AG04450 (cell line): ENCODE measurements at regions of chr1 and their contacts with region 1.

Region 1: GRCh38 chr1:32215629-32216480 is 6.3 kb downstream of the TMEM234 start:
- DNase-seq: no peak
- H3K4me3 ChIP-seq: no peak overlapping the region
- H3K27ac ChIP-seq: no peak overlapping the region
- H3K27me3 ChIP-seq: no peaks in the 10 kb centered on the region
- CTCF ChIP-seq: peak; percentile 90

Region 2: DNA sequence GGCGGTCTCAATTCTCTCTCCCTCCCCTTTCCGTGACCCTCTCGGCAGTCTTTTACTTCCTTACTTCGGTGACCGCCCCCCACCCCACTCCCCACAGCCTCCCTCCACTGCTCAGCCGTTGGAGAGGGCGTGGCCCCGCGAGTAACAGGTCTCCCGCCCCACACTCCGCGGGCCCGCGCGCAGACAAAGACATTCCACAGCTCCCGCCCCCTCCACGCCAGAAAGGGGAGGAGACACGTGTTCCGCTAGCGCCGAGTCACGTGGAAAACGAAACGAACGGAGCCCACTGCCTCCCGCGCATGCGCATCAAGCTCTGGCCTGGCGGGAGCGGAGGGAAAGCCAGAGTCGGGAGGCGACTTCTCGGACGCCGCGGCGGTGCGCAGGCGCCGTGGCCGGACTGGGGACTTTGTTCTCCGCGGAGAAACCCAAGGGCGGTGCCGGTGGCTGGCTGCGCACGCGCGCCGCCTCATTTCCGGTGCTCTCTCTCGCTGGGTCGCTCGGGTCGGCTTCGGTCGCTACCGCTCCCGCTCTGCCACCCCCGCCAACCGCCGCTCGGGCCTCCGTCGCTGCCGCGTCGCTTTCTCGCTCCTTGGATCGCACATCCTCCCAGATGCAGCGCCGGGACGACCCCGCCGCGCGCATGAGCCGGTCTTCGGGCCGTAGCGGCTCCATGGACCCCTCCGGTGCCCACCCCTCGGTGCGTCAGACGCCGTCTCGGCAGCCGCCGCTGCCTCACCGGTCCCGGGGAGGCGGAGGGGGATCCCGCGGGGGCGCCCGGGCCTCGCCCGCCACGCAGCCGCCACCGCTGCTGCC is 202.3 kb before region 1 on chr1 and contains the start of gene KHDRBS1:
- CTCF ChIA-PET with region 1: no interaction called
- POLR2A ChIA-PET with region 1: no interaction called
- DNase-seq: peak; percentile 99
- H3K4me3 ChIP-seq: peak within 1 kb of the TSS; percentile 99
- H3K27ac ChIP-seq: peak within 1 kb of the TSS; percentile 96
- H3K27me3 ChIP-seq: no peaks in the 10 kb centered on the region
- CTCF ChIP-seq: no peak
- polyA plus RNA-seq, gene KHDRBS1: 76.2 and 76.6 TPM in 2 replicates

Region 3: DNA sequence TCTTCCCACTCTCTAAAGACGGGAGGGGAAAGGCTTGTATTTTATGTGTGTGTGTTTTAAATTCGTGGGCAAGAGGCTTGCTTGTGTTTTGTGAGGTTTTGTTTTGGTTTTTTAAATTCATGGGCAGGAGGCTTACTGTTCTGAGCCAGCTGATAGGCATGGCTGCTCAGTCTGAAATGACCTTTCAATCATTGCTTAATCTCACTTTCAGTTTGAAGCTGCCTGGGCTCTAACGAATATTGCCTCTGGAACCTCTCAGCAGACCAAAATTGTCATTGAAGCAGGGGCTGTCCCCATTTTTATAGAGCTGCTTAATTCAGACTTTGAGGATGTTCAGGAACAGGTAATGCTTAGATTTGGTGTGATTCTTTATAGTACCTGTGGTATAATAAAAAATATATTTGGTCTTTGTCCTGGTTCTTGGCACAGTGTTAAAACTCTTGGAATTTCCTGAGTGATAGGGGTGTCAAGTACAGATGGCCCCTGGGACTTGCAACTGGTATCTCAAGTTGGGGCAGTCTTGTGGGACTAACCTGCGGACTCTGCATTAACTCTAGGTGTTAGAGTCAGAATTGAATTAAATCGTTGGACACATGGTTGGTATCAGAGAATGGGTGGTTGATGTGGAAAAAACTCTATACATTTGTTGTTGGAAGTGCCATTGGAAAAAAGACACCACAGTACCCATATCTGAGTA is 56.5 kb before region 1 on chr1:
- CTCF ChIA-PET with region 1: no interaction called
- POLR2A ChIA-PET with region 1: no interaction called
- DNase-seq: no peak
- H3K4me3 ChIP-seq: no peak overlapping the region
- H3K27ac ChIP-seq: no peak overlapping the region
- H3K27me3 ChIP-seq: no peaks in the 10 kb centered on the region
- CTCF ChIP-seq: no peak

Region 4: GRCh38 chr1:32205401-32206370 is 10.2 kb before region 1 on chr1 and contains the start of gene IQCC:
- CTCF ChIA-PET with region 1: interaction called, 18 read pairs
- POLR2A ChIA-PET with region 1: interaction called, 3 read pairs
- DNase-seq: no peak
- H3K4me3 ChIP-seq: peak within 1 kb of the TSS; percentile 80
- H3K27ac ChIP-seq: peak within 1 kb of the TSS; percentile 39
- H3K27me3 ChIP-seq: no peaks in the 10 kb centered on the region
- CTCF ChIP-seq: no peak
- polyA plus RNA-seq, gene IQCC: 1.2 and 1.3 TPM in 2 replicates

Region 5: DNA sequence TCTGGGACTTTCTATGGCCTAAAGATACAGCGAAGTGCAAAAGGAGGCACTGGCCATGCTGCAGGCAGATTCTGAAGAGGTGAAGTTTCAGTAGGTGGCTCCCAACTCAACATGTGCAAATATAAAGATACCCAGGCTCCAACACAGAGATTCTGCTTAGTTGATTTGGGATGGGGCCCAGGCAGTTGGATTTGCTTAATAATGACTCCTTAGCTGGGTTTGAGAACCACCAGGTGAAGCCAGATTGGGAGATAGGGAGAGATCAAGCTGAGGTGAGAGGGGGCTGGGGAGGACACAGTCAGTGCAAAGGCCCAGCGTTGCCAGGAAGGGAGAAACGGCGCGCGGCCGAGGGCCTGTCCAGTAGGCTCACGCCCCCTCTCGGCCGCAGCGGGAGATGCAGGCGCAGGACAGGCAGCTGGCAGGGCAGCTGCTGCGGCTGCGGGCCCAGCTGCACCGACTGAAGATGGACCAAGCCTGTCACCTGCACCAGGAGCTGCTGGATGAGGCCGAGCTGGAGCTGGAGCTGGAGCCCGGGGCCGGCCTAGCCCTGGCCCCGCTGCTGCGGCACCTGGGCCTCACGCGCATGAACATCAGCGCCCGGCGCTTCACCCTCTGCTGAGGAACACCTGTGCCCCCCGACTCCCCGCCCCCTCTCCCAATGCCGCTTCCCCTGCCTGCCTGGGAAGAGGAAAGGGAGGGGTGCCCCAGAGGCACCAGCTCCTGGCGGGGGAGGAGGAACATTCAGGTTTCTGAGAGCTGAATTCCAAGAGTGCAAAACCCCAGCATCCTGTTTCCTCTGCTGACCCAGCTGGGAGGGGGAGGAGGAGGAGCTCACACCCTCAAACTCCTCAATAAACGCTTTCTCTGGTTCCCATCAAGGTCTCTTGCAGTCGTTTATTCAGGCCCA is 32.4 kb after region 1 on chr1:
- CTCF ChIA-PET with region 1: interaction called, 15 read pairs
- POLR2A ChIA-PET with region 1: no interaction called
- DNase-seq: peak; percentile 27
- H3K4me3 ChIP-seq: no peak overlapping the region
- H3K27ac ChIP-seq: no peak overlapping the region
- H3K27me3 ChIP-seq: no peaks in the 10 kb centered on the region
- CTCF ChIP-seq: peak; percentile 75

Region 6: GRCh38 chr1:32372149-32372756 is 156.4 kb after region 1 on chr1:
- CTCF ChIA-PET with region 1: interaction called, 10 read pairs
- POLR2A ChIA-PET with region 1: no interaction called
- DNase-seq: no peak
- H3K4me3 ChIP-seq: no peak overlapping the region
- H3K27ac ChIP-seq: no peak overlapping the region
- H3K27me3 ChIP-seq: no peaks in the 10 kb centered on the region
- CTCF ChIP-seq: no peak